Activated CD8-positive, alpha-beta memory T cell treated with anti-CD3 and anti-CD28 coated beads, Interleukin-2, amount 10 ng/mL, durations not matched to agents 7 days and 5 days (primary cell): ENCODE measurements at regions of chr19 and their contacts with region 1.

Region 1: GRCh38 chr19:16185123-16185767 is at the start of gene FAM32A:
- DNase-seq: peak; percentile 100
- ATAC-seq: peak; percentile 97
- H3K4me3 Mint-ChIP-seq: peak within 1 kb of the TSS; percentile 97
- H3K27ac Mint-ChIP-seq: peak within 1 kb of the TSS; percentile 96
- H3K4me1 Mint-ChIP-seq: peaks cover 38% of the 10 kb centered on the region
- H3K27me3 Mint-ChIP-seq: no peaks in the 10 kb centered on the region
- total RNA-seq, gene FAM32A: 64.6 to 72.0 TPM

Region 2: DNA sequence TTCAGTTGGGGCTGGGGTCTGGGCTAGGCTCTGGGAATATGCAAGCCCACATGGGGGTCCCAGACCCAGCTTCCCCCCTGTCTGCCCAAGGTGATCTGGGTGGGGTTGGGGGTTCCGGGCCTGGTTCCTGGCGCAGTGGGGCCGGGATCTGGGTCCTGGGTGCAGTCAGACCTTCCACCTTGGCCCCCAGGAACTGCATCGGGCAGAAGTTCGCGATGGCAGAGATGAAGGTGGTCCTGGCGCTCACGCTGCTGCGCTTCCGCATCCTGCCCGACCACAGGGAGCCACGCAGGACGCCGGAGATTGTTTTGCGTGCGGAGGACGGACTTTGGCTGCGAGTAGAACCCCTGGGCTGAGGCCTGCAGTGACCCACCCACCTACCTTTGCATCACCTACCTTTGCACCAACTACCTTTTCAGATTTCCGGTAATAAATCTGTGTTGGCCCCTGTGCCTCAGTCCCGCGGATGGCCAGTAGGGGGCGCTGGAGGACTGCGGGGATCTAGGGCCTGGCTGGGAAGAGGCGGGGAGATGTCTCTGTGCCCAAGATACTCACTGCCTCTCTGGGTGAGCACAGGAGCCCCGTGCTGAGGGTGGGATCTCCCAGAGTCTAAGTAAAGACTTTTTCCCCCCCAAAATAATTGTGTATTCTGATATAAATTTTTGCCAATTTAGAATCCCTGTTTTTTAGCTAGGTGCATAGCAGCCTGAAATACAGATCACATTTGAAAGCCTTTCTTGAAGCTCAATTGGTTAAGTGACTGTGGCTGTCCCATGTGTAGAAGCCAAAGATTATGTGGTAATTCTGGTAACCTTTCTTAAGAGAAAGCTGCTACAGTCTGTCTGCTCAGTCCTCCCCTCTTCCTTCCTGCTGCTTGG is 556.0 kb before region 1 on chr19:
- CTCF ChIA-PET with region 1: interaction called, 10 read pairs
- DNase-seq: peak; percentile 89
- ATAC-seq: peak; percentile 92
- H3K4me3 Mint-ChIP-seq: no peak overlapping the region
- H3K27ac Mint-ChIP-seq: no peak overlapping the region
- H3K4me1 Mint-ChIP-seq: peaks cover 2% of the 10 kb centered on the region
- H3K27me3 Mint-ChIP-seq: peaks cover 9% of the 10 kb centered on the region

Region 3: GRCh38 chr19:16062789-16063188 is 122.5 kb before region 1 on chr19:
- CTCF ChIA-PET with region 1: interaction called, 10 read pairs
- DNase-seq: peak; percentile 78
- ATAC-seq: peak; percentile 48
- H3K4me3 Mint-ChIP-seq: no peak overlapping the region
- H3K27ac Mint-ChIP-seq: peak overlapping the region; percentile 40
- H3K4me1 Mint-ChIP-seq: peaks cover 33% of the 10 kb centered on the region
- H3K27me3 Mint-ChIP-seq: peaks cover 10% of the 10 kb centered on the region

Region 4: DNA sequence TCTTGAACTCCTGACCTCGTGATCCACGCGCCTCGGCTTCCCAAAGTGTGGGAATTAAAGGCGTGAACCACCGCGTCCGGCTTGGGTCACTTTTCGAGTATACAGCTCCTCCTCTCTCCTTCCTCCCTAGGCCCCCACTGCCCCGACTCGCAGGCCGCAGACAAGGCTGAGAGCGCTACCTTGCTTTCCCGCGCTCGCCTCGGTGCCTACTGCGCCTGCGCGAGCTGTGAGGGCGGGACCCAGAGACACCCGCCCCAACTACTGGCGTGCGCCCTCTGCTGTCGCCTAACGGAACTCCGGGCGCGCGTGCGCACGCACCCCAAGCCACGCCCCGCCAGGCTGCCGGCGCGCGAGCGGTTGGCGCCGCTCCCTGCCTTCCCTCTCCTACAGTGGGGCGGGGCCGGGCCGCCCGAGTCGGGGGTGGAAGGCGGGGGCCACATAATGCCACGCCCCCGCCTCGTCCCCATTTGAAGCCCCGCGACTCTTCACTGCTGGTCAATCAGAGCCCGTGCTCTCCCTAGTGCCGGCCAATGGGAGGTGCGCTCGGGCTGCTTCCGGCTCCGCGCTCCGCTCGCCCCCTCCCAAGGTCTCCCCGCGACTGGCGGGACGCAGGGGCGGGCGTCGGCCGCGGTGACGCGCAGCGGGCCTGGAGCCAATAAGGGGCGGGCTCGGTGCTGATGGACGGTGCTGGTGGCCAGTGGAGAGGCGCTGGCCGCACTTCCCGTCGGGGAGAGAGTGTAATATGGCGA is 73.9 kb before region 1 on chr19 and contains the start of gene RAB8A:
- CTCF ChIA-PET with region 1: interaction called, 12 read pairs
- DNase-seq: peak; percentile 99
- ATAC-seq: peak; percentile 94
- H3K4me3 Mint-ChIP-seq: peak within 1 kb of the TSS; percentile 92
- H3K27ac Mint-ChIP-seq: peak within 1 kb of the TSS; percentile 97
- H3K4me1 Mint-ChIP-seq: peaks cover 40% of the 10 kb centered on the region
- H3K27me3 Mint-ChIP-seq: no peaks in the 10 kb centered on the region
- total RNA-seq, gene RAB8A: 204 to 271 TPM

Region 5: GRCh38 chr19:16168465-16169081 is 16.7 kb before region 1 on chr19:
- CTCF ChIA-PET with region 1: interaction called, 12 read pairs
- DNase-seq: no peak
- ATAC-seq: peak; percentile 45
- H3K4me3 Mint-ChIP-seq: no peak overlapping the region
- H3K27ac Mint-ChIP-seq: peak overlapping the region; percentile 75
- H3K4me1 Mint-ChIP-seq: peaks cover 25% of the 10 kb centered on the region
- H3K27me3 Mint-ChIP-seq: no peaks in the 10 kb centered on the region

Region 6: DNA sequence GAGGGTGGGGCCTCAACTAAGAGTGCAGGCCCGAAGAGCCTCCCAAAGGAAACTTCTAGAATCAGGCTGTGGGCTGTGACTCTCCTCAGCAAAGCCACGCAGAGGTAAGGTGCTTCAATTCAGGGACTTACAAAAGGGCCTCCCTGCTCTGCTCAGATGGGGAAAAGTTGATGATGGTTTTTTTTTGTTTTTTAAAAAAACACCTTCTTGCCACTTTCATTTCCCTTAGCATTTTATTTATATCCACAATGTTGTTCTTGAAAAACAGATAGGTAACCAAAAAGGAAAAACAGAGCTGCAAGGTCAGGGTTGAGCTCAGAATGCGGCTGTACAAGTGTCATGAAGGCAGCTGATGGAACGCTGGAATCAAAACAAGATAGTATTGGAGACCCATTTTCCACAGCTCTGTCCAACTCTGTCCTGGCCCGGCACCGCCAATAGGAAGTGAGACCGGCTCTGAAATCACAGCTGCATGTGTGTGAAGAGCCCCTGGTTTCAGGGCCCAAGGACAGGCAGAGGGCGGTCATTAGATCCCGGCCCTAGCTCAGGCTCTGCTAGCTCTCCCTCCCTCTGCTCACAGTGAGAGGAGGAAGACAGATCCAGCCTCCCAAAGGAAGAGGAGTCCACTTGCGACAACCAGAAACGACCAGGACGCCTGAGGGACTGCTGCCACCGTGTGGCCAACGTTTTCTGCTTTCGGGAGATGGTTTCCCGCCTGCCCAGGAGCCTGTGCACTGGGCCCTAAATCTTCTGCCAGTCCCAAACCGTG is 197.7 kb after region 1 on chr19:
- CTCF ChIA-PET with region 1: interaction called, 13 read pairs
- DNase-seq: peak; percentile 85
- ATAC-seq: peak; percentile 71
- H3K4me3 Mint-ChIP-seq: no peak overlapping the region
- H3K27ac Mint-ChIP-seq: peak overlapping the region; percentile 73
- H3K4me1 Mint-ChIP-seq: peaks cover 27% of the 10 kb centered on the region
- H3K27me3 Mint-ChIP-seq: no peaks in the 10 kb centered on the region